ENCODE measurements at regions of chr1 and their contacts with region 1.

Region 1: DNA sequence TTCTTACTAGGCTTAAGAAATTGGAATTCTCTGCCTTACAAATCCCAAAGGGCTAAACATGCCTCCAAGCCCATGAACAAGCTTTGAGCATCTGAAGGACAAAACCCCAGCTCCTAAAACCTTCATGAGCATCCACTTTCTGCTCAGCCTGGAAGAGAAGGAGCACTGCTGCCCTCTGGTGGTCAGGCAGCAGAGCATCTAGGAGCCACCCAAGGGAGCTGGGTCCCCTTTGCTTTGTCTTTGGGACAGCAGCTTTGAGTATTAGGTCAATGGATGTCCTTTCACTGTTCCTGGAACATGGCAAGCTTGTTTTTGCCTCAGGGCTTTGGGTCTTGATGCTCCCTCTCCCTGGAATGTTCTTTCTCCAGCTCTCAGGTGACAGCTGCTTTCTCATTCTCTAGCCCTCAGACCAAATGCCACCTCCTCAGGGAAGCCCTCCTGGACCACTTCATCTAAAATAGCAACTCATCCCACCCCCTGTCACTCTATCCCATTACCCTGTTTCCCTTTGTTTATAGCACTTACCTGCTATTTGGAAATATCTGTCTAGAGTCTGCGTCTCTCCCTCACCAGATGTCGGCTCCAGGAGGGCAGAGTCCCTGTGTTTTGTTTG is 25.7 kb downstream of the RAB7B start:
- DNase-seq: peak; percentile 66
- ATAC-seq: peak; percentile 77 to 85

Region 2: GRCh38 chr1:205668951-205669340 is 308.6 kb before region 1 on chr1:
- intact Hi-C with region 1: loop called (anchors 5 to 10 kb)
- DNase-seq: no peak
- ATAC-seq: peak in 1 of 2 donors; percentile 21

Region 3: GRCh38 chr1:205791568-205792180 is 185.8 kb before region 1 on chr1:
- intact Hi-C with region 1: loop called (anchors 5 kb)
- DNase-seq: peak; percentile 63
- ATAC-seq: peak; percentile 85 to 87

Region 4: GRCh38 chr1:206075786-206076755 is 98.6 kb after region 1 on chr1:
- intact Hi-C with region 1: no loop called
- DNase-seq: no peak
- ATAC-seq: peak in 1 of 2 donors; percentile 24

Region 5: GRCh38 chr1:206094024-206094423 is 116.5 kb after region 1 on chr1:
- intact Hi-C with region 1: no loop called
- DNase-seq: no peak
- ATAC-seq: no peak

Measured in left cardiac atrium (tissue), 4 donors.